Activated CD4-positive, alpha-beta memory T cell treated with anti-CD3 and anti-CD28 coated beads for 36 hours (primary cell): ENCODE measurements at regions of chr19 and their contacts with region 1.

Region 1: DNA sequence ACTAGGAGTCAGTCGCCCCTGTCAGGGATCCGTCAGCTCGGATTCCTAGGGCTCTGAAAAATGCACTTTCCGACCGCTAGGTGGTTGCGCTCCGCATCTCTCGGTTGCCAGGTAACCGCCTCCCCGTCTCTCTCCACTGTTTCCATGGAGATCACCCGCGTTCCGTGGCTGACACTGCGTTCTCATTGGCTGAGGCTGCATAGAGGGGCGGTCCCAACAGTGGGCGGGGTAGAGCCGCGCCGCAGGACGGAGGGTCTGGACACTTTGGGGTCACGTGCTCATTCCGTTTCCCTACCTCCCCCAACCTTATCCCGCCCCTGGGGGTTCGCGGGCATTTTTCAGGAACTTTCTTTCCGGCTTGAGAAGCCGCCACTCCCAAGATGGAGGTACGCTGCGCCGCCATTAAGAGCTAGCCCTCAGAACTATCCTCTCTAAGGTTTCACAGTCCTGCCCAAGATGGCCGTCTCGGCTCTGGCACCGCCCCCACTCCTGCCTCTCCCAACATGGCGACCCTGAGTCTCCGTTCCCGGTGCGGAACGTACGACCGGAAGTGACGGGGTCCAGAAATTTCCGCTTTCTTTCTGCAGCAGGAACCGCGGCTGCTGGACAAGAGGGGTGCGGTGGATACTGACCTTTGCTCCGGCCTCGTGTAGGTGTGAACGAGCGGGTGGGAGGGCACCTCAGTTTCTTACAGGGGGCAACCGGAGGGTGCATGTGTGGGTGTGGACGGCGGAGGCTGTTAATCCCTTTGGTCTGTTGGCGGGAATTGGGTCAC is at the starts of genes ODAD3 and PRKCSH:
- DNase-seq: peak; percentile 99
- H3K4me3 Mint-ChIP-seq: peak within 1 kb of the TSS; percentile 99
- H3K27ac Mint-ChIP-seq: peak within 1 kb of the TSS; percentile 95
- H3K4me1 Mint-ChIP-seq: peaks cover 24% of the 10 kb centered on the region
- H3K27me3 Mint-ChIP-seq: peaks cover 1% of the 10 kb centered on the region
- total RNA-seq, gene ODAD3: 0.15 to 0.26 TPM
- total RNA-seq, gene PRKCSH: 260 to 264 TPM

Region 2: DNA sequence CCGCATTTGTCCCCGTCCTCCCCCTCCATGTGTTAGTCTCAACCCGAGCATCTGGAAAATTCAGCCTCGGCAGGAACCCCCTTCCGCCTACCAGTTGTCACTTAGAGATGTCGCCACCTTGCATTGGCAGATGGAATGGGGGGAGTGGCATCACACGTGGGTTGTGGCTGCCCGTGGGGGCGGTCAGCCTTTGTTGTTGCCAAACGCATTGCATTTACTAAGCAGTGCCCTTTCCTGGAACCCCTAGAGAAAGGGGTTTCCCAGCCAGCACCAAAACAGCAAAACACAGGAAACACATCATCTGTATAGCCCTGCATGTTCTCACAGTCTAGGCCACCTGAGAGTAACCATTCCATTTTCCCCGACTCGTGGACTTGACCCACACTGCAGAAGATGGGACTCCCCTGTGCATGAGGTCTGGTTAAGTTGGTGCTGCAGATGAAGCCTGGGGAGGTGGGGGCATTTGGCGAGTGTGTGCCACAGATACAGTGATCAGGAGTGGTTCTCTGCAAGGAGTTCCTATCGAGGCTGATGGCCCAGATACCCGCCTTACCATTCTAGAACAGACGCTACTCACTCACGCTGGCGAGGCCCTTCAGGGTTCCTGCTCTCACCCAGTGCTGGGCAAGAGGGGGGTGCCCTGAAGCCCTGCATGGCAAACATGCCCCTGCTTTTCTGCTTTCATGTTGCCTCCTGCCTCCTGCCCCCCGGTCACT is 637.5 kb before region 1 on chr19:
- CTCF ChIA-PET with region 1: no interaction called
- POLR2A ChIA-PET with region 1: no interaction called
- intact Hi-C with region 1: no loop called
- DNase-seq: peak; percentile 98
- H3K4me3 Mint-ChIP-seq: peak overlapping the region; percentile 76
- H3K27ac Mint-ChIP-seq: peak overlapping the region; percentile 99
- H3K4me1 Mint-ChIP-seq: peaks cover 32% of the 10 kb centered on the region
- H3K27me3 Mint-ChIP-seq: no peaks in the 10 kb centered on the region

Region 3: DNA sequence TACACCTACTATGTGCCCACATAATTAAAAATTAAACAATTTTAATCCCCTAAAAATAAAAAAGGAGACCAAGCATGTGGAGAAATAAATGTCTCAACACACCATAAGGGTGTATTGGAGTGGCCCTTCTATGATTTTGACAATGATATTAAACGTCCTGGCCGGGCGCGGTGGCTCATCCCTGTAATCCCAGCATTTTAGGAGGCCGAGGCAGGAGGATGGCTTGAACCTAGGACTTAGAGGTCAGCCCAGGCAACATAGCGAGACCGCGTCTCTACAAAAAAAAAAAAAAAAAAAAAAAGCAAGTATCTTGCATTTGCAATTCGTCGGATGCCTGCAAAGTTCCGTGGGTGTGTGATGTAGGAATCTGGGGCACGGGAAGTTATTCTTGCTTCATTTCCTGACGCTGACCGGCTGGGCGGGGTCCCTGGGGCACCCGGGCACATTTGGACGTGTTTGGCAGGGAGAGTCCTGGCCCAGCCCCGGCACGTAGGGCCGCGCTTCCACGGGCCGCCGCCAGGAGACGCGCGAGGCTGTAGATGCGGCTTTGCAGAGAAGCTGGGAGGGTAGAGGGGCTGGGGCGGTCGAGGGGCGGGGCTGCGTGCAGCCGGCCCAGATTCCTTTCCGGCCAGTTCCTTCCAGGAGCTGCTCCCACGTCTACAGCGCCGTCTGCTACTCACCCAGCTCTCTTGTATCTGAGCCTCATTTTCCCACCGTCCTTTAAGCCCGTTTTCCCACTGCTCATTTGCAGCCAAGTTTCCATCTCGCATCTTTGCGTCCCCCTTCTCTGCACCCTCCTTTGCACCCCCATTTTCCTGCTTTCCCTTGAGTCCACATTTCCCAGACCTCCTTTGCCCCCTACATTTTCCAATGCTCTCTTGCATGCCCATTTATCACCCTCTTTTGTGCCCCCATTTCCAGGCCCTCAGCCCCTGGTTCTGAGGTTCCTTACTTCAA is 141.5 kb before region 1 on chr19:
- CTCF ChIA-PET with region 1: no interaction called
- POLR2A ChIA-PET with region 1: no interaction called
- intact Hi-C with region 1: loop called (anchors 5 kb)
- DNase-seq: peak; percentile 90
- H3K4me3 Mint-ChIP-seq: peak overlapping the region; percentile 43
- H3K27ac Mint-ChIP-seq: no peak overlapping the region
- H3K4me1 Mint-ChIP-seq: peaks cover 10% of the 10 kb centered on the region
- H3K27me3 Mint-ChIP-seq: peaks cover 13% of the 10 kb centered on the region

Region 4: DNA sequence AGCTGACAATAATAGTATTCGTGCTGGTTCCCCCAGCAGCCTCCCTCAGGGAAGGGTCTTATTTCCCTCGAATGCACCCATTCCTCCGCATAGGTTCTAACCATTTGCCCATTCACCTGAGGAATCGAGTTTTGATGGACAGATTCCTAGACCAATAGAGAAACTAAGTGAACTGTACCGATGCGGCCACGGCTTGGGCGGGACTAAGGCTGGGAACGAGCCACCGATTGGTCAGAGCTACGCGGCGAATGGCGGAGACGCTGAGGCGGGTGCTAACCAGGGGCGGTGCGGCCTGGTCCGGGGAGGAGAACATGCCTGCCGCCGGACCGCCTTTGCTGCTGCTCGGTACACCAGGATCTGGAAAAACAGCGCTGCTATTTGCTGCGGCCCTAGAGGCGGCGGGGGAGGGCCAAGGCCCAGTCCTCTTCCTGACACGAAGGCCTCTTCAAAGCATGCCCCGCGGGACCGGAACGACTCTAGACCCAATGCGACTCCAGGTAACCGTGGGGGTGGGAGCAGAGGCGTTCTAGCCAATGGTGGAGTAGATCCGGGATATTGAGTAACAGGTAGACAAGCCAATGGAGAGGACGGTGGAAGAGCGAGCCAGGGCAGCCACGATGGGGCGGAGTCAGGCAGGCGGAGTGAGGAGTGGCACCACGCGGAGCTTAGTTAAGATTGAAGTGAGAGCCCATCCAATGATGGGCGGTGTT is 60.7 kb before region 1 on chr19 and contains the start of gene SWSAP1:
- CTCF ChIA-PET with region 1: interaction called, 9 read pairs
- POLR2A ChIA-PET with region 1: interaction called, 3 read pairs
- intact Hi-C with region 1: loop called (anchors 1 kb)
- DNase-seq: peak; percentile 99
- H3K4me3 Mint-ChIP-seq: no peak within 1 kb of the TSS
- H3K27ac Mint-ChIP-seq: no peak within 1 kb of the TSS
- H3K4me1 Mint-ChIP-seq: peaks cover 28% of the 10 kb centered on the region
- H3K27me3 Mint-ChIP-seq: no peaks in the 10 kb centered on the region
- total RNA-seq, gene SWSAP1: 1.5 to 1.7 TPM

Region 5: GRCh38 chr19:11380653-11381534 is 54.4 kb before region 1 on chr19:
- CTCF ChIA-PET with region 1: interaction called, 17 read pairs
- POLR2A ChIA-PET with region 1: interaction called, 11 read pairs
- intact Hi-C with region 1: loop called (anchors 1 kb)
- DNase-seq: peak; percentile 98
- H3K4me3 Mint-ChIP-seq: peak overlapping the region; percentile 81
- H3K27ac Mint-ChIP-seq: peak overlapping the region; percentile 90
- H3K4me1 Mint-ChIP-seq: peaks cover 40% of the 10 kb centered on the region
- H3K27me3 Mint-ChIP-seq: peaks cover 10% of the 10 kb centered on the region

Region 6: GRCh38 chr19:11422163-11423021 is 12.9 kb before region 1 on chr19:
- CTCF ChIA-PET with region 1: interaction called, 9 read pairs
- POLR2A ChIA-PET with region 1: no interaction called
- intact Hi-C with region 1: loop called (anchors 1 kb)
- DNase-seq: peak; percentile 87
- H3K4me3 Mint-ChIP-seq: peak overlapping the region; percentile 62
- H3K27ac Mint-ChIP-seq: no peak overlapping the region
- H3K4me1 Mint-ChIP-seq: peaks cover 39% of the 10 kb centered on the region
- H3K27me3 Mint-ChIP-seq: peaks cover 46% of the 10 kb centered on the region

Region 7: GRCh38 chr19:11482384-11483050 is 47.3 kb after region 1 on chr19:
- CTCF ChIA-PET with region 1: interaction called, 18 read pairs
- POLR2A ChIA-PET with region 1: no interaction called
- intact Hi-C with region 1: loop called (anchors 1 kb)
- DNase-seq: peak; percentile 91
- H3K4me3 Mint-ChIP-seq: peak overlapping the region; percentile 70
- H3K27ac Mint-ChIP-seq: peak overlapping the region; percentile 52
- H3K4me1 Mint-ChIP-seq: peaks cover 19% of the 10 kb centered on the region
- H3K27me3 Mint-ChIP-seq: peaks cover 17% of the 10 kb centered on the region